ENCODE measurements at regions of chr7 and their contacts with region 1.

Region 1: GRCh38 chr7:14806891-14807290 is 95.7 kb downstream of the DGKB start:
- DNase-seq: no peak
- ATAC-seq: no peak
- H3K4me3 ChIP-seq: no peak overlapping the region
- H3K4me3 Mint-ChIP-seq: no peak overlapping the region
- H3K27ac ChIP-seq: no peak overlapping the region
- H3K27ac Mint-ChIP-seq: no peak overlapping the region
- H3K4me1 ChIP-seq: no peaks in the 10 kb centered on the region
- H3K4me1 Mint-ChIP-seq: no peaks in the 10 kb centered on the region
- H3K27me3 ChIP-seq: no peaks in the 10 kb centered on the region
- H3K27me3 Mint-ChIP-seq: no peaks in the 10 kb centered on the region
- CTCF ChIP-seq: no peak

Region 2: DNA sequence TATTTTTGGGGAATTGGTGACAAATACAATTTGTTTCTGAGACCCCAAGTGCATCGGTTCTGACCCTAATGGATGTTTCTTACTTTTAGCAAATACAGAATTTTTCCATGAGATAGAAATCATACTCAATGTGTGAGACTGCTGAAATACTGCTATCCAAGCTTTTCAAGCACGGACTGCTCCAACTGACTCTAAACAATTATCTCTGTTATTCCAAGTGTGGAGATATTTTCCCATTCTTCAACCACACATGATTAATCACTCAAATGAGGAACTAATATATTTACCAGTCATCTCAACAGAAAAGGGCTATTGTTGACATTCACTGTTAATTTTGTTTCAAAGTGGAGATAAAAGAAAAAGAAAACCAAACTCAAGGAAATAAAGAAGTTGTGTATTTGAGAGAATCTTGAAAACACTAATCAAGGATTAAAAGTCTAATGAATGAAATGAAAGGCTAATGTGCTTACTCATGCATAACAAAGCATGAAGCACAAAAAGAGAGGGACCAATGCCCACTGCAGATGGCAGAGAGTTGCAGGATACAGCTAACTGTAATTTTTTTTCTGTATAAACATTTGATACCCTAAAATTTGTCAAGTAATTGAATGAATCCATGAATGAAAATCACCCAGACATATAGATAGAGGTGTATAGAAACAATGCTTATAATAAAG is 327.9 kb before region 1 on chr7:
- CTCF ChIA-PET with region 1: no interaction called
- POLR2A ChIA-PET with region 1: no interaction called
- intact Hi-C with region 1: loop called in 1 of 2 experiments (anchors 5 kb)
- DNase-seq: no peak
- ATAC-seq: no peak
- H3K4me3 ChIP-seq: no peak overlapping the region
- H3K4me3 Mint-ChIP-seq: no peak overlapping the region
- H3K27ac ChIP-seq: no peak overlapping the region
- H3K27ac Mint-ChIP-seq: no peak overlapping the region
- H3K4me1 ChIP-seq: no peaks in the 10 kb centered on the region
- H3K4me1 Mint-ChIP-seq: no peaks in the 10 kb centered on the region
- H3K27me3 ChIP-seq: no peaks in the 10 kb centered on the region
- H3K27me3 Mint-ChIP-seq: no peaks in the 10 kb centered on the region
- CTCF ChIP-seq: no peak